ENCODE measurements at regions of chr12 and their contacts with region 1.

Region 1: GRCh38 chr12:7108796-7109571 is at the start of gene C1RL:
- DNase-seq: peak; percentile 76
- CTCF ChIP-seq: peak; percentile 98

Region 2: GRCh38 chr12:6944381-6945186 is 164.4 kb before region 1 on chr12:
- CTCF ChIA-PET with region 1: interaction called, 18 read pairs
- POLR2A ChIA-PET with region 1: no interaction called
- DNase-seq: peak; percentile 79
- CTCF ChIP-seq: peak; percentile 94

Region 3: DNA sequence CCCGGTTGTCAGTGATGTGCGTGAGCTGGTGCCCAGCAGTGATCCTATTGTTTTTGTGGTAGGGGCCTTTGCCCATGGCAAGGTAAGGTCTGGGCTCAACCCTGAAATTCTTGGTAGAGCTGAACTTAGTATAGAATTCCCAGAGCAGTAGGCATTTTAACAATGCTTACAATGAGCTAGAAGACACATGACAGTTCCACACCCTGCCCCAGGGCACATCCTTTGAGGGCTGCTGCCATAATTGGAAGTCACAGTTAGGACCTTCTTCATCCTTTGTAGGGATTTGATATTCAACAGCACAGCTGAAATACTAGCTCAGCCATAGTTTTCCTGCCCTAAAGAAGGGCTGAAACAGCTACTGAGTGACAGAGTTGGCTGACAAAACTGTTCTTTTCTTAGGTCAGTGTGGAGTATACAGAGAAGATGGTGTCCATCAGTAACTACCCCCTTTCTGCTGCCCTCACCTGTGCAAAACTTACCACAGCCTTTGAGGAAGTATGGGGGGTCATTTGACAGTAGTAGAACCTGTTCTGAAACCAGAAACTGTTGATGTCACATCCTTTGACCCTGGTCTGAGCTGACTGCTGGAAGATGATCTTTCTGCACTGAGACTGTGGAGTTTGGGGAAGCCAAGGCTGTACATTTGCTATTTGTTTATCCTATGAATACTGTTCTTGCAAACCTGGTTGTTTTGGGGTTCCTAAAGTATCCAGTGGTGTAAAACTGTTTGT is 133.5 kb before region 1 on chr12:
- CTCF ChIA-PET with region 1: interaction called, 15 read pairs
- POLR2A ChIA-PET with region 1: no interaction called
- DNase-seq: no peak
- CTCF ChIP-seq: no peak

Region 4: DNA sequence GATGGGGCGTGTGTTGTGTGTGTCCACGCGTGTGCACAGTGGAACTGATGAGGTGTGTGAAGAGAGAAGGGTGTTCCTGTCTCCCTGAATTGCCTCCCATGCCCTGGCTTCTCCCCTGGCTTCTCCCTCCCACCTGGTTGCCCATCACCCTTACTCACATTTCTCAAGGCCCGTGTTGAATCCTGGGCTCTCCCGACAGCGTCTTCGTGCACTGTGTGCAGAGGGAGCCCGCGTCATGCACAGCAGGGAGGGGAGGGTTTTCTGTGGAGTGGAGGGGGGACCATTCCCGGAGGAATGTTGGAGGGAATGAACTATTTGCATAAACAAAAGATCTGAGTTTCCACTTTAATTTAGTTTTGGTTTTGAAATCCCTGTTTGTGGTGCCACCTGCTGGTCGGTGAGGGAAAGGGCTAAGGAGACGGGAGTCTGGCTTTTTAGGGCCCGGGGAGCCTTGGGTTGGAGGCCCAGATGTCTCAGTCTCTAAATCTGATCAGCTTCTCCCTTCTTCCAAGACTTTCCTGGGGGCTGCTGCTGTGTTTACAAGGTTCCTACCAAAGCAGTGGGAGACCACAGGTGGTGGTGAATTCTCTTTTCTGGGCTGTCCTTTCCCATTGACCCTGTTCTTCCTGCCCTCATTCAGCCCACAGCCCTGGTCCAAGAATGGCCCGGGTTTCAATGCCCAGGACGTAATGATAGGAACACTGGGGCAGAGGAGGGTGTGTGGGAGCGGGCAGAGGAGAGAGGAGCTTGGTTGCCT is 16.6 kb before region 1 on chr12 and contains the start of gene C1R:
- CTCF ChIA-PET with region 1: interaction called, 26 read pairs
- POLR2A ChIA-PET with region 1: no interaction called
- DNase-seq: peak; percentile 82
- CTCF ChIP-seq: peak; percentile 91

Region 5: GRCh38 chr12:7129872-7130680 is 21.1 kb after region 1 on chr12 and contains the start of gene CLSTN3:
- CTCF ChIA-PET with region 1: interaction called, 108 read pairs
- POLR2A ChIA-PET with region 1: no interaction called
- DNase-seq: peak; percentile 100
- CTCF ChIP-seq: no peak

Region 6: GRCh38 chr12:7188562-7189397 is 79.8 kb after region 1 on chr12:
- CTCF ChIA-PET with region 1: no interaction called
- POLR2A ChIA-PET with region 1: no interaction called
- DNase-seq: peak; percentile 52
- CTCF ChIP-seq: peak; percentile 75

Measured in GM10248 (cell line).